SK-N-SH (cell line): ENCODE measurements at regions of chr3 and their contacts with region 1.

Region 1: DNA sequence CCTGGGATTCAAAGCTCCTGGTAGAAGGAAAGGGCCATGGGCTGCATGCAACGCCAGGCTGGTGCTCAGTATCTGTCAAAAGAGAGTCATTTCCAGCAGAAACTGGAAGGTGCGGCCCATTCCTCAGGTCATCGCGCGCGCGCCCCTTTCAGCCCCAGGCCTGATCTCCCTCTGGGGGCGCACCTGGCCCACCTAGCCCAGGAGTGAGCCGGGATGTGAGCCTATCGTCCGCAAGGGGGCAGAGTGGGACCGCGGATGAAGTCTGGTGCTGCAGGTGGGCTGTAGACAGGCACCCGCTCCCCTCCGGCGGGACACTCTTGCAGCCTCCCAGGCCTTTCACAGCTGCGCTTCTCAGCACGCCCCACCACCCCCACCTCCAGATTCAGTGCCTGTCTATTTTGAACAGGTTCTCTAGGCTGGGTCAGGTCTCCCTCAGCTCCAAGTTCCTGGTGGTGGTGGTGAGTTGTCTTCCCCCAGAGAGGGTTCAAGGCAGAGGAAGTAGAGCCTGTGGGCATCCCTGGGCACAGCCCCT is 5.8 kb upstream of the RPL29 start:
- DNase-seq: peak; percentile 92
- H3K4me3 ChIP-seq: peak overlapping the region in 1 of 2 experiments; percentile 36; a peak in 1 of 4 replicates
- H3K27ac ChIP-seq: peak overlapping the region in 1 of 2 experiments; percentile 61; a peak in 2 of 4 replicates
- H3K4me1 ChIP-seq: peaks cover 20 to 48% of the 10 kb centered on the region in 2 experiments
- H3K27me3 ChIP-seq: no peaks in the 10 kb centered on the region
- CTCF ChIP-seq: peak; percentile 97
- EP300 ChIP-seq: no peak
- RAD21 ChIP-seq: peak; percentile 96

Region 2: DNA sequence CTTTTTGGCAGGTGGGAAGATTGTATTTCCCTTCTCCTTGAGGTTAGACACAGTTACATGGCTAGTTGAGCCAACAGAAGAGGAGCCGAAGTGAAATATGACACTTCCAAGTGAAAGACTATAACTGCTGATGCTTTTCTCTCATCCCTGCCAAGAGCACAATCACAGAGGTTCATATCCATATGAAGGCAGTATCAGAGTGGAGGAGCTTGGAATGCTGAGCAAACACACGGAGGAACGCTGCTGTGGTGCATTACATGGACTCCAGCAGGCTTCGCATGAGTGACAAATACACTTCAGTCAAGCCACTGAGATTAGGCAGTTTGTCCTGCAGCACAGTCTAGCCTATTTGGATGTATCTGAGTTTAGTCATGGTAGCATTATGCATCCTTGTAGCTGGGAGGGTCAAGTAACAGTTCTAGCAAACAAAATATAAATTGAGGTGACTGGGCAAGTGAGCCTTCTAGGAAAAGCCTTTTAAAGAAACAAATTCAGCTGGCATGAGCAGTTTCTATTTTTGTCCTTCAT is 227.9 kb before region 1 on chr3:
- CTCF ChIA-PET with region 1: no interaction called
- POLR2A ChIA-PET with region 1: no interaction called
- DNase-seq: no peak
- H3K4me3 ChIP-seq: no peak overlapping the region
- H3K27ac ChIP-seq: no peak overlapping the region
- H3K4me1 ChIP-seq: peaks cover 0 to 16% of the 10 kb centered on the region in 2 experiments; a peak in 1 of 4 replicates
- H3K27me3 ChIP-seq: no peaks in the 10 kb centered on the region
- CTCF ChIP-seq: no peak
- EP300 ChIP-seq: no peak
- RAD21 ChIP-seq: no peak

Region 3: DNA sequence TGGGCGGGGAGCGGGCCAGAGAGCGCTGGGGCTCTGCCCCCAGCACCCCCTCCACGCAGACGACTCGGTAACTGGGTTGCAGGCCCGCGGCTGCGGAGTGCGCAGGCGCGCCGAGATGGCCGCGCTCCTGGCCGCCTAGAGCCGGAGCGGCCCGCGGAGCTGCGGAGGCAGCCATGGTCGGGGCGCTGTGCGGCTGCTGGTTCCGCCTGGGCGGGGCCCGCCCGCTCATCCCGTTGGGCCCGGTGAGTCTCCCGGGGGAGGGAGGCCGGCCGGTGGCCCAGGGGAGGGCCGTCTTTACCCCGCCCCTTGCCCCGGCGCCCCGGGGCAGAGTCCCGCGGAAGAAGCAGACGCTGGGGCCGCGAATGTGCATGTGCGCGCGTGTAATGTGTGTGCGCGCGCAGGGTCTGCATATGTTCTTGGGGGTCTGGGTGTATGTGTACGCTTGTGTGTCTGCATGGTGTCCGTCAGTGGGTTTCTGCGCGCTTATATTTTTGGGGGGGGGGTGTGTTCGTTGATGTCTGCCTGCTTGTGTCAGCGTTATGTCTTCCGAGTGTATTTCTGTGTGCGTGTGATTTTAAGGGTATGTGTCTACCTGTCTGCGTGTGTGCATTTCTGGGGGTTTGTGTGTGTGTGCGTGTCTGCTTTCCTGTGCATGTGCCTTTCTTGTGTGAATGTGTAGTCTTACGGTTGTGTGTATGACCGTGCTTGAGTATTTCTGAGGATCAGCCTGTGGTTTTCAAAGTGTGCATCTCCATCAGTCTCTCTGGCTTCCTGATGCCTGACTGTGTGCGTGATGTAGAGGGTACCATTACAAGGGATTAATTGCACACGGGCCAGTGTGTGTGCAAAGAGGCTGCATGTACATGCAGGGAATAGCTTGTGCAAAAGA is 26.3 kb before region 1 on chr3 and contains the start of gene ABHD14A:
- CTCF ChIA-PET with region 1: interaction called, 16 read pairs
- POLR2A ChIA-PET with region 1: interaction called, 20 read pairs
- DNase-seq: peak; percentile 92
- H3K4me3 ChIP-seq: peak within 1 kb of the TSS; percentile 53 to 85
- H3K27ac ChIP-seq: peak within 1 kb of the TSS; percentile 63 to 90; a peak in 3 of 4 replicates
- H3K4me1 ChIP-seq: peaks cover 7 to 31% of the 10 kb centered on the region in 2 experiments
- H3K27me3 ChIP-seq: no peaks in the 10 kb centered on the region
- CTCF ChIP-seq: no peak
- EP300 ChIP-seq: no peak
- RAD21 ChIP-seq: no peak
- polyA plus RNA-seq, gene ABHD14A: 22.1 and 31.5 TPM in 2 replicates

Region 4: GRCh38 chr3:52023860-52024764 is 22.6 kb after region 1 on chr3:
- CTCF ChIA-PET with region 1: interaction called, 205 read pairs
- POLR2A ChIA-PET with region 1: interaction called, 144 read pairs
- DNase-seq: no peak
- H3K4me3 ChIP-seq: no peak overlapping the region
- H3K27ac ChIP-seq: peak overlapping the region in 1 of 2 experiments; percentile 88; a peak in 2 of 4 replicates
- H3K4me1 ChIP-seq: peaks cover 20 to 82% of the 10 kb centered on the region in 2 experiments; a peak in 2 of 4 replicates
- H3K27me3 ChIP-seq: no peaks in the 10 kb centered on the region
- CTCF ChIP-seq: no peak
- EP300 ChIP-seq: no peak
- RAD21 ChIP-seq: no peak

Region 5: GRCh38 chr3:52056968-52057805 is 55.7 kb after region 1 on chr3:
- CTCF ChIA-PET with region 1: interaction called, 983 read pairs
- POLR2A ChIA-PET with region 1: interaction called, 86 read pairs
- DNase-seq: peak; percentile 97
- H3K4me3 ChIP-seq: peak overlapping the region; percentile 65 to 94
- H3K27ac ChIP-seq: peak overlapping the region; percentile 88 to 93
- H3K4me1 ChIP-seq: peaks cover 13 to 66% of the 10 kb centered on the region in 2 experiments
- H3K27me3 ChIP-seq: no peaks in the 10 kb centered on the region
- CTCF ChIP-seq: no peak
- EP300 ChIP-seq: no peak
- RAD21 ChIP-seq: peak; percentile 17; the same call in 1 of the 2 replicates

Region 6: DNA sequence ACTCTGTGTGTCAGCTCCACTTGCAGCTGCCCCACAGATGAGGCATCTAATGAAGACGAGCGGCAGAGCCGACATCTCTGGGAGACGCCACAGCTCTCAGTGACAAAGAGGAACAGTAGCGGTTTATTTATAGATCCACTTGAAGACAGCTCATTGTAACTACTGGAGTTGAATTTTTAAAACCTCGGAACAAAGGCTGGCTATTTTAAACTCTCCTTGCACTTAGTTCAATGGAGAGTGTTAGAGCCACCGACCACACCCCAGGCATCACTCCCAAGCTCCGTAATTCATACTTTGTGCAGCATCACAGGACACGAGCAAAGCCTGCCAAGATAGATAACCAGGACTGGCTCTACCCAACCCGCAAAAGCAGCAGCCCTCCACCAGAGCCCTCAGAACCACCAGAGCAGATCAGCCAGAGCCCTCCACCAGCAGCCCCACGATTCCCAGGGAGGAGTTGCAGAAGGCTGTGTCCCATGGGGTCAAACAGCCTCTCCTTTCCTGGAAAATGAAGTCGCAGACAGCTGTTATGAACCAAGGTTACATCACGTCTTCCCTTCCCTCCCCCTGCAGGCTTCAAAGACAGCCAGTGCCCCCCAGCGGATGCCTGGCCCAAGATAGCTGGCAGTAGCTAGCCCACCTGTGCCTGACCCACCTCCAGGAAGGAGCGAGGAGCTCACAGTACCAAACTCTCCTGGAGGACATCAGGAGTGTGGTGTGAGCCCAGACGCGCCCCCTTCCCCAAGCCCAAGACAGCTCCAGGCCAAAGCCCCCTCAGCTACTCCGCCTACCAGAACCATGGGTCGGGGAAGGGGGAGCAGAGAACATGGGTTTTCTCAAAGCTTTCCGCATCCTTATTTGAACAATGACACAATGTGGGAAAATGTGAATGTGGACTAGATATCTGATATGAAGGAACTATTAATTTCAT is 107.1 kb after region 1 on chr3:
- CTCF ChIA-PET with region 1: interaction called, 36 read pairs
- POLR2A ChIA-PET with region 1: interaction called, 5 read pairs
- DNase-seq: peak; percentile 75
- H3K4me3 ChIP-seq: no peak overlapping the region
- H3K27ac ChIP-seq: peak overlapping the region in 1 of 2 experiments; percentile 96; a peak in 2 of 4 replicates
- H3K4me1 ChIP-seq: peaks cover 0 to 37% of the 10 kb centered on the region in 2 experiments; a peak in 2 of 4 replicates
- H3K27me3 ChIP-seq: no peaks in the 10 kb centered on the region
- CTCF ChIP-seq: no peak
- EP300 ChIP-seq: peak in 1 of 2 experiments; percentile 50; a peak in 1 of 4 replicates
- RAD21 ChIP-seq: no peak; the same call in 1 of the 2 replicates

Region 7: GRCh38 chr3:52154117-52155094 is 152.9 kb after region 1 on chr3 and contains the start of gene POC1A:
- CTCF ChIA-PET with region 1: interaction called, 608 read pairs
- POLR2A ChIA-PET with region 1: interaction called, 7 read pairs
- DNase-seq: peak; percentile 93
- H3K4me3 ChIP-seq: peak within 1 kb of the TSS; percentile 76 to 84
- H3K27ac ChIP-seq: peak within 1 kb of the TSS; percentile 81 to 95
- H3K4me1 ChIP-seq: peaks cover 5 to 14% of the 10 kb centered on the region in 2 experiments; a peak in 3 of 4 replicates
- H3K27me3 ChIP-seq: no peaks in the 10 kb centered on the region
- CTCF ChIP-seq: no peak
- EP300 ChIP-seq: no peak
- RAD21 ChIP-seq: no peak
- polyA plus RNA-seq, gene POC1A: 9.6 and 11.7 TPM in 2 replicates